Activated CD8-positive, alpha-beta T cell treated with anti-CD3 and anti-CD28 coated beads for 36 hours (primary cell): ENCODE measurements at regions of chr14 and their contacts with region 1.

Region 1: DNA sequence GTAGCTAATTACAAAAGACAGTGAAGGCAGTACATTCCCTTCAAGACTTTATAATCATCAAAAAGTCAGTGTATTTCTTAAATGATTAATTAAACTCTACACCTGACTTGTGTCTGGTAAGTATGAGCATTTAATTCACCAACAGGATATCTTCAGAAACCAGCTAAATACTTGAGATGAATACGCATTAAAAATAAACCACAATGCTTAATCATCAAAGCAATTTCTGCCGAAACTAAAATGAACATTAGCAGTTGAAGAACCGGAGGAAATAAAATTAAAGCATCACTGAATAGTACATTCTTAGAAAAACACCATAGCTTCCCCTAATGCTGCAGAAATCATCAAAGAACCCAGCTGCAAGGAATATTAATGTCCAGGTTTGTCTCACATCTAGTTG is 32.7 kb downstream of the SLC25A21 start:
- DNase-seq: no peak
- ATAC-seq: no peak
- H3K4me3 Mint-ChIP-seq: no peak overlapping the region
- H3K27ac Mint-ChIP-seq: no peak overlapping the region
- H3K4me1 Mint-ChIP-seq: no peaks in the 10 kb centered on the region
- H3K27me3 Mint-ChIP-seq: no peaks in the 10 kb centered on the region
- CTCF ChIP-seq: no peak

Region 2: GRCh38 chr14:37034410-37035285 is 105.1 kb before region 1 on chr14:
- CTCF ChIA-PET with region 1: no interaction called
- POLR2A ChIA-PET with region 1: no interaction called
- intact Hi-C with region 1: no loop called
- DNase-seq: no peak
- ATAC-seq: no peak
- H3K4me3 Mint-ChIP-seq: no peak overlapping the region
- H3K27ac Mint-ChIP-seq: no peak overlapping the region
- H3K4me1 Mint-ChIP-seq: no peaks in the 10 kb centered on the region
- H3K27me3 Mint-ChIP-seq: no peaks in the 10 kb centered on the region
- CTCF ChIP-seq: no peak

Region 3: DNA sequence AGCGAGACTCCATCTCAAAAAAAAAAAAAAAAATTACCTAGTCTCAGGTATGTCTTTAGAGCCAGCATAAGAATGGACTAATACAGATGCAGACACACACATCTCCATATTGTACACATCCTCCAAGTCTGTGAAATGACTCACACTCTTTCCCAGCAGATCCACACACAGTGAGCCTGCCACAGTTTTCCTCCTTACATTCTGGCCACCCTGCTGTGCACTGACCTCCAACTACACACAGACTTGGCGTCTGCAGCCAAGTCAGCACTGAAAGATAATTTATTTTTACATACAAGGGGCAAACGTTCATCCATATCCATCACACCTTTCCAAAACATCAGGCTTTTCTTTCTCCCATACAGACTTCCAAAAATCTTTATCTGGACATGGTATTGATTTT is 83.2 kb before region 1 on chr14:
- CTCF ChIA-PET with region 1: no interaction called
- POLR2A ChIA-PET with region 1: no interaction called
- intact Hi-C with region 1: no loop called
- DNase-seq: no peak
- ATAC-seq: no peak
- H3K4me3 Mint-ChIP-seq: no peak overlapping the region
- H3K27ac Mint-ChIP-seq: no peak overlapping the region
- H3K4me1 Mint-ChIP-seq: no peaks in the 10 kb centered on the region
- H3K27me3 Mint-ChIP-seq: no peaks in the 10 kb centered on the region
- CTCF ChIP-seq: no peak

Region 4: DNA sequence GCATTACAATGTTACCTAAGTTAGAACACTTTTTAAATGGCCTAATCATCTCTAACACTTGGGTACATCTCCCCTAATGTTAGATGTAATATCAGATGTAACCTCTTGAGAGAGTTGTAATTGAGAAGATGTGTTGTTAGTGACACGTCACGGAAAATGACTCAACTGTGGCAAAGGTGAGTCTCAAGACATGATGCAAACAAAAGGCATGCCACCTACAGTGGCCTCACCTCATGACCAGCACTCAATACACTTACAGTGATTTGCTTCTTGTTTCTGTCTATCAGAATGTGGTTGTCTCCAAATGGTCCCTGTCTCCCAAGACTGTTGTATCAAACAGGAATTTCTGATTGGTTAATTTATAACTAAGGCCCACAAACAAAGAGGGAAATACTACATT is 58.5 kb before region 1 on chr14:
- CTCF ChIA-PET with region 1: no interaction called
- POLR2A ChIA-PET with region 1: no interaction called
- intact Hi-C with region 1: no loop called
- DNase-seq: peak; percentile 2
- ATAC-seq: no peak
- H3K4me3 Mint-ChIP-seq: no peak overlapping the region
- H3K27ac Mint-ChIP-seq: no peak overlapping the region
- H3K4me1 Mint-ChIP-seq: no peaks in the 10 kb centered on the region
- H3K27me3 Mint-ChIP-seq: no peaks in the 10 kb centered on the region
- CTCF ChIP-seq: no peak

Region 5: DNA sequence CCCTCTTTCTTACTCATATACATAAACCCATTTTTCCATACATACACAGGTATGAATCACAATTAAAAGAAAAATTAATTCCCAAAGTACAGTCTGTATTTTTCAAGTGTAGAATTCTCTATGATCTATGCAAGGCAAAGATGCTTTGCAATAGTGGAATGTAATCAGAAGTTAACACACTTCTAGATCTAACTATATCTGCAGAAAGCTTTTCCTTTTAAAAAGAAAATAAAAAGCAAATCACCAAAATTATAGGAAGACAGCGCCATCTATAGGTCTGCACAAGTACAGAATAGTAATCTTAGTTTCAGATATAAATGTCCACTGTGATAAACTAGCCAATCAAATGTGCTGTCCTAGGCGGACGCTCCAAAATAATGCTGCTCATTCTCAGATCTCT is 10.7 kb after region 1 on chr14:
- CTCF ChIA-PET with region 1: interaction called, 18 read pairs
- POLR2A ChIA-PET with region 1: no interaction called
- intact Hi-C with region 1: no loop called
- DNase-seq: no peak
- ATAC-seq: no peak
- H3K4me3 Mint-ChIP-seq: no peak overlapping the region
- H3K27ac Mint-ChIP-seq: no peak overlapping the region
- H3K4me1 Mint-ChIP-seq: no peaks in the 10 kb centered on the region
- H3K27me3 Mint-ChIP-seq: no peaks in the 10 kb centered on the region
- CTCF ChIP-seq: peak; percentile 62

Region 6: GRCh38 chr14:37363661-37364060 is 224.0 kb after region 1 on chr14:
- CTCF ChIA-PET with region 1: no interaction called
- POLR2A ChIA-PET with region 1: no interaction called
- intact Hi-C with region 1: no loop called
- DNase-seq: no peak
- ATAC-seq: no peak
- H3K4me3 Mint-ChIP-seq: no peak overlapping the region
- H3K27ac Mint-ChIP-seq: no peak overlapping the region
- H3K4me1 Mint-ChIP-seq: no peaks in the 10 kb centered on the region
- H3K27me3 Mint-ChIP-seq: no peaks in the 10 kb centered on the region
- CTCF ChIP-seq: no peak